ENCODE measurements at regions of chr3 and their contacts with region 1.

Region 1: DNA sequence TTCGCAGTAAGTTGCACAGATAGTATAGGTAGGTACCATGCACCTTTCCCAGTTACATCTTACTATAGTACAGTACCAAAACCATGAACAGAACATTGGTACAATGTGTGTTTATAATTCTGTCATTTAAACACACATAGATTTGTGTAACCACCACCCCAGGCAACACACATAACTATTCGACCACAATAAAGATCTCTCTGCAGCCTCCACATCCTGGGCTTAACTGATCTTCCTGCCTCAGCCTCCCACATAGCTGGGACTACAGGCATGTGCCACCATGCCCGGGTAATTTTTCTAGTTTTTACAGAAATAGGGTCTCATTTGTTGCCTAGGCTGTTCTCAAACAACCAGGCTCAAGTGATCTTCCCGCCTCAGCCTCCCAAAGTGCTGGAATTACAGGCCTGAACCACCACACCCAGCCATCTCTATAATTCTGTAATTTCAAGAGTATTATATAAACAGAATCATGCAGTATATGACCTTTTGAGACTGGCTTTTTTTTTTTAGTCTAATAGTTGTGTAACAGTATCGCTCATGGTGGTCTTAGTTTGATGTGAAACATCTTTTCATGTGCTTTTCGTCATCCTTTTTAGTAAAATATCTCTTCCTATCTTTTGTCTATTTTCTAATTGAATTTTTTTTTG is 13.3 kb upstream of the TMF1 start:
- DNase-seq: peak; percentile 41
- H3K4me3 Mint-ChIP-seq: peak overlapping the region; percentile 31
- H3K27ac Mint-ChIP-seq: peak overlapping the region; percentile 85
- H3K4me1 Mint-ChIP-seq: peaks cover 56% of the 10 kb centered on the region
- H3K27me3 Mint-ChIP-seq: no peaks in the 10 kb centered on the region

Region 2: GRCh38 chr3:69051756-69052471 is 13.5 kb before region 1 on chr3 and contains the start of gene TMF1:
- CTCF ChIA-PET with region 1: interaction called, 28 read pairs
- POLR2A ChIA-PET with region 1: interaction called, 3 read pairs
- DNase-seq: peak; percentile 99
- H3K4me3 Mint-ChIP-seq: peak within 1 kb of the TSS; percentile 93
- H3K27ac Mint-ChIP-seq: peak within 1 kb of the TSS; percentile 96
- H3K4me1 Mint-ChIP-seq: peaks cover 51% of the 10 kb centered on the region
- H3K27me3 Mint-ChIP-seq: no peaks in the 10 kb centered on the region
- total RNA-seq, gene TMF1: 43.0 to 43.5 TPM